ENCODE measurements at regions of chr4 and their contacts with region 1.

Region 1: GRCh38 chr4:16908377-16909021 is 10.1 kb upstream of the LDB2 start:
- DNase-seq: no peak
- ATAC-seq: no peak
- H3K4me3 ChIP-seq: no peak overlapping the region
- H3K27ac ChIP-seq: no peak overlapping the region
- H3K4me1 ChIP-seq: no peaks in the 10 kb centered on the region
- H3K27me3 ChIP-seq: no peaks in the 10 kb centered on the region
- CTCF ChIP-seq: no peak

Region 2: DNA sequence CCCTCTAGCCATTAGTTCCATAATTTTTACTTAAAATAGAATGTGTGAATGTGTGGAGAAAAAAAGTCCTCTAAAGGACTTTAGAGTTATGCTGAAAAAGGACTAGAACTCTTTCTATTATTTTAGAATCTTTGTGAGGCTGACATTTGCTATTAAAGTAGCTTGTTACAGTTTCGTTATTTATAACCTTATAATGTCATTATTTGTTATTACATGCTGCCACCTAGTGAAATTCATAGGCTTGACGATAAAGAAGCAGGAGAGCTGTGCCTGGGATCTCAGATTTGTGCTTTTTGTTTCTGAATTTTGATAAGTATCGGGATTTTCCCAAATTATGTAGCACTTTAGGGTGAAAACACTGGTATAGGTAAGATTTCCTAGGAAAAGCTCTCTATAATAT is 643.7 kb before region 1 on chr4:
- CTCF ChIA-PET with region 1: no interaction called
- POLR2A ChIA-PET with region 1: no interaction called
- in situ Hi-C with region 1: no loop called
- intact Hi-C with region 1: no loop called
- DNase-seq: no peak
- ATAC-seq: no peak
- H3K4me3 ChIP-seq: no peak overlapping the region
- H3K27ac ChIP-seq: no peak overlapping the region
- H3K4me1 ChIP-seq: no peaks in the 10 kb centered on the region
- H3K27me3 ChIP-seq: no peaks in the 10 kb centered on the region
- CTCF ChIP-seq: peak; percentile 49; the same call in 1 of the 2 replicates

Region 3: GRCh38 chr4:16875487-16875886 is 33.0 kb before region 1 on chr4:
- CTCF ChIA-PET with region 1: no interaction called
- POLR2A ChIA-PET with region 1: no interaction called
- in situ Hi-C with region 1: no loop called
- intact Hi-C with region 1: no loop called
- DNase-seq: no peak
- ATAC-seq: no peak
- H3K4me3 ChIP-seq: no peak overlapping the region
- H3K27ac ChIP-seq: no peak overlapping the region
- H3K4me1 ChIP-seq: no peaks in the 10 kb centered on the region
- H3K27me3 ChIP-seq: no peaks in the 10 kb centered on the region
- CTCF ChIP-seq: no peak

Region 4: DNA sequence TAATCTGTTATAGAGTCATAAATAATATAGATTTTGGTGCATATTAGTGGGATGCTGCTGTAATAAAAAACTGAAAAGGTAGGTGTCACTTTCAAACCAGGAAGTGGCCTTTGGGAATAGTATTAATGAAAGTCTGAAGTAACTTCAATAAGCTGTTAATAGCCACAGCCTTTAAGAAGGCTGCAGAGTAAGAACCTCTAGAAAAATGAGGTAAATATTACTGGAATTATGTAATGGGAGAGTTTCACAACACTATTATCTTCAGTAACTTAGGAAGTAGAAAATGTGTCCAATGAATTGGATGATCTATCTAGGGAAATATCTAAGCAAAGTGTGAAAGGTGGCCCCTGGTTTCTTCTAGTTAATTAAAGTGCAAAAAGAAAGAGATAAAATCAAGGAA is 1006.9 kb after region 1 on chr4:
- CTCF ChIA-PET with region 1: no interaction called
- POLR2A ChIA-PET with region 1: no interaction called
- in situ Hi-C with region 1: no loop called
- intact Hi-C with region 1: no loop called
- DNase-seq: no peak
- ATAC-seq: no peak
- H3K4me3 ChIP-seq: no peak overlapping the region
- H3K27ac ChIP-seq: no peak overlapping the region
- H3K4me1 ChIP-seq: no peaks in the 10 kb centered on the region
- H3K27me3 ChIP-seq: no peaks in the 10 kb centered on the region
- CTCF ChIP-seq: no peak

Region 5: GRCh38 chr4:18798123-18798522 is 1889.6 kb after region 1 on chr4:
- CTCF ChIA-PET with region 1: no interaction called
- POLR2A ChIA-PET with region 1: interaction called, 16 read pairs
- in situ Hi-C with region 1: no loop called
- intact Hi-C with region 1: no loop called
- DNase-seq: no peak
- ATAC-seq: no peak
- H3K4me3 ChIP-seq: no peak overlapping the region
- H3K27ac ChIP-seq: no peak overlapping the region
- H3K4me1 ChIP-seq: no peaks in the 10 kb centered on the region
- H3K27me3 ChIP-seq: no peaks in the 10 kb centered on the region
- CTCF ChIP-seq: no peak